Psoas muscle (tissue), 8 donors: ENCODE measurements at regions of chr6 and their contacts with region 1.

Region 1: GRCh38 chr6:109117346-109118035 is 22.2 kb downstream of the CEP57L1 start:
- DNase-seq: no peak
- ATAC-seq: peak in 2 of 4 donors; percentile 27 to 34
- H3K4me3 ChIP-seq: no peak overlapping the region
- H3K27ac ChIP-seq: peak overlapping the region; percentile 8
- H3K4me1 ChIP-seq: peaks cover 35% of the 10 kb centered on the region
- H3K27me3 ChIP-seq: no peaks in the 10 kb centered on the region
- CTCF ChIP-seq: no peak

Region 2: GRCh38 chr6:109165392-109165974 is 48.0 kb after region 1 on chr6:
- intact Hi-C with region 1: loop called in 1 of 2 experiments (anchors 5 kb)
- DNase-seq: peak; percentile 27 to 59
- ATAC-seq: peak; percentile 77 to 93 (median 92)
- H3K4me3 ChIP-seq: no peak overlapping the region
- H3K27ac ChIP-seq: peak overlapping the region; percentile 5
- H3K4me1 ChIP-seq: peaks cover 13% of the 10 kb centered on the region
- H3K27me3 ChIP-seq: no peaks in the 10 kb centered on the region
- CTCF ChIP-seq: no peak